AG04449 (cell line): ENCODE measurements at regions of chr17 and their contacts with region 1.

Region 1: DNA sequence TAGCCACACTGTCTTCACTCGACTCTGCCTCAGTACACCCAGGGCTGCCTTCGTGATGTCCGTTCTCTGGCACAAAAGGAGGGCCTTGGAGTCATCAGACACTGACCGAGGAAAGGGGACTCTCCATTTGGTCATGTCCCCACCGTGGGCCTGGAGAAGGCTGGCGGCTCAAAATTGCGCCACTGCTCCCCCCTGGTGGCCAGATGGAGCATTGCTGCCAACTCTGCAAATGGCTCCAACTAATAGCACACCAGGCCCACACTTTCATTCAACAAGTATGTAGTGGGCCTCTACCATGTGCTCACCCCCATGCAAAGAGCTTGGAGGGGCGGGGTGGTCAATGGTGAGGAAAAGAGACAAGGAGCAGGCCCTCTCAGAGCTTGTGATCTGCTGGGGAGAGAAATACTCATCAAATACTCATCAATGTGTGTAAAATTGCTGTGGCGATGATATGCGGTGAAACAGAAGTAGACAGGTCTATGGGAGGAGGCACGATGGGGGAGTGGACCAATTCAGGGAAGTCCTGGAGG is 5.2 kb upstream of the GRIN2C start:
- DNase-seq: no peak
- H3K4me3 ChIP-seq: no peak overlapping the region
- CTCF ChIP-seq: peak; percentile 92

Region 2: GRCh38 chr17:74736513-74737298 is 128.2 kb before region 1 on chr17 and contains the start of gene RAB37:
- CTCF ChIA-PET with region 1: interaction called, 29 read pairs
- POLR2A ChIA-PET with region 1: no interaction called
- DNase-seq: no peak
- H3K4me3 ChIP-seq: no peak within 1 kb of the TSS; the same call in 1 of the 2 replicates
- CTCF ChIP-seq: peak; percentile 18

Region 3: DNA sequence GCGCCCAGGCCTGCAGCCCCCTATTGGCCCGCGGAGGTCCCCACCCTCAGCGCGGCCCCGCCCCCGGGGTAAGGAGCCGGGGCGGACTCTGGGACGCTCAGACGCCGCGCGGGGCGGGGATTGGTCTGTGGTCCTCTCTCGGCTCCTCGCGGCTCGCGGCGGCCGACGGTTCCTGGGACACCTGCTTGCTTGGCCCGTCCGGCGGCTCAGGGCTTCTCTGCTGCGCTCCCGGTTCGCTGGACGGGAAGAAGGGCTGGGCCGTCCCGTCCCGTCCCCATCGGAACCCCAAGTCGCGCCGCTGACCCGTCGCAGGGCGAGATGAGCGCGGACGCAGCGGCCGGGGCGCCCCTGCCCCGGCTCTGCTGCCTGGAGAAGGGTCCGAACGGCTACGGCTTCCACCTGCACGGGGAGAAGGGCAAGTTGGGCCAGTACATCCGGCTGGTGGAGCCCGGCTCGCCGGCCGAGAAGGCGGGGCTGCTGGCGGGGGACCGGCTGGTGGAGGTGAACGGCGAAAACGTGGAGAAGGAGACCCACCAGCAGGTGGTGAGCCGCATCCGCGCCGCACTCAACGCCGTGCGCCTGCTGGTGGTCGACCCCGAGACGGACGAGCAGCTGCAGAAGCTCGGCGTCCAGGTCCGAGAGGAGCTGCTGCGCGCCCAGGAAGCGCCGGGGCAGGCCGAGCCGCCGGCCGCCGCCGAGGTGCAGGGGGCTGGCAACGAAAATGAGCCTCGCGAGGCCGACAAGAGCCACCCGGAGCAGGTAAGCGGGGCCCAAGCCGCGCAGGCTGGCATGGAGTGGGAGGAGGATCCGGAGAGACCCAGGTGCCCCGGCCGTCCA is 116.2 kb before region 1 on chr17 and contains the start of gene NHERF1:
- CTCF ChIA-PET with region 1: interaction called, 185 read pairs
- POLR2A ChIA-PET with region 1: no interaction called
- DNase-seq: peak; percentile 38
- H3K4me3 ChIP-seq: peak within 1 kb of the TSS; percentile 76
- CTCF ChIP-seq: peak; percentile 18

Region 4: DNA sequence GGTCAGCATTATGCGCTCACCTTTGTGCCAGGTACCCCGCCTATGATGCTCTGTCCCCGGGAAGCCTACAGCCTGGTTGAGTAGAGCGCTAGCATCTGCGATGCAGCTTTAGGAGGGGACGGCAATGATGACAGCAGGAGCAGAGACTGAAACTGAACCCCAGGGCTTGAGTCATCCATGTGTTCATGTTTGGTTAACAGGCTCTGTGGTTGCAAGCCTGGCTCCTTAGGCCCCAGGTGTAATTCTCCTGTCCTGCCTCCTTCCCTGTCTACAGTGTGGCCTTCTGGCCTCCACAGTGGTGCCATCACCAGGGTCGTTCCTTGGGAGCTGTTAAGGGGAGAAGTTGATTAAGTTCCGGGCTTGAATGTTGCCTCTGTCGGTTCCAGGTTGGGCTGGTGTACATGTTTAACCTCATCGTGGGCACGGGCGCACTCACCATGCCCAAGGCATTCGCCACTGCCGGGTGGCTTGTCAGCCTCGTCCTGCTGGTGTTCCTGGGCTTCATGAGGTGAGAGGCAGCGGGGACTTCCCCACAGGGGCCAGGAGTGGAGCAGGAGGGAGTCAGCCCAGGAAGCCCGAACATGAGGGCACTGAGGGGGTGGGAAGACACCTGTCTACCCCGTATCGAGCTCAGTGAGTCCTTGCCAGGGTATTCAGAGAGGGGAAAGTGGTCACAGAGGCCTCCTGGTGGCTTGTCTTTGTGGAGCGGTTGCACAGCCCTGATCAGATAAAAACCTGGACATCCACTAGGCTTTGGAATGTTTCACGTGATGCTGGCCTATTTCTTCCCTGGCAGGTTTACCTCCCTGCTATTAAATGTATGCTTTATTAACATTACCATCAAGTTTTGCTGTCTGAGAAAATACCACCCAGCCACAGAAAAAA is 79.6 kb before region 1 on chr17:
- CTCF ChIA-PET with region 1: interaction called, 692 read pairs
- POLR2A ChIA-PET with region 1: no interaction called
- DNase-seq: no peak
- H3K4me3 ChIP-seq: no peak overlapping the region
- CTCF ChIP-seq: no peak

Region 5: DNA sequence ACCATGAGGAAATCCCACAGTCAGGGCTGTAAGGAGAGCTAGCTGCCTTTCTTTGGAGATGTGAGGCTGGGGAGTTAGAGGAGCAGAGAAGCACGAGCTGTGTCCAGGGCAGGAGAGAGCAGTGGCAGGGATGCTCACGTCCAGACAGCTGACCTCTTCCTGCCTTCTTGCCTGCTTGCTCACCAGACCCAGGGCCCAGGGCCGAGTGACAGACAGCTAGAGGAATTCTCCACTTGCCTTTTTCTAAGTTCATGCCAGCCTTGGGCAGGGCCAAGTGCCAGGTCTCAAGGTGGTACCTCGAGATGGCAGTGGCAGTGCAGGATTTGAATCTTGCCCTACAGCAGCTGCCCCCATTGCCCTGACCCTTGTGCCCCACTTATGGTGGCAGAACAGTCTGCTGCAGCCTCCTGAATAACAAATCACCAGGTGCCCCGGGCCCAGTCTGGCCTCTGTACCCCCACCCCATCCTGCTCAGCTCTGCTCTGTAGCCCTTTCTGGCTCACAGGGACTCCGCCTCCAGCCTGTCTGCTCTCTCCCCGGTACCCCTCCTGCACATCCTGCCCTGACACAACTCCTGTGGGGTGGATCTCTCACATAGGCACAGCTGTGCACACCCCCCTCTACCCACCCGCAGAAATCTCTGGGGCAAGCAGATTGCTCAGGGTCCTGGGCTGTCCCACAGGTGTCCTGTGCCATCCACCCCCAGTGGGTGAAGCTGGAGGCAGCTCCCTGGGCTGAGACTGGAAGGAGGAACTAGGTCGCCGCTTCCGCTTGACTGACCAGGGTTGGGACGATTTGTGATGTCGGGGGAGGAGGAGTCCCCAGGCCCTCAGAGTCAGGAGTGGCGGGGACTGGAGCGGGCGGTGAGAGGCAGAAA is 31.2 kb before region 1 on chr17:
- CTCF ChIA-PET with region 1: interaction called, 276 read pairs
- POLR2A ChIA-PET with region 1: no interaction called
- DNase-seq: peak; percentile 9
- H3K4me3 ChIP-seq: no peak overlapping the region
- CTCF ChIP-seq: no peak

Region 6: GRCh38 chr17:74852237-74853047 is 12.5 kb before region 1 on chr17:
- CTCF ChIA-PET with region 1: interaction called, 276 read pairs
- POLR2A ChIA-PET with region 1: no interaction called
- DNase-seq: no peak
- H3K4me3 ChIP-seq: peak overlapping the region; percentile 12; the same call in 1 of the 2 replicates
- CTCF ChIP-seq: no peak